ENCODE measurements at regions of chr4 and their contacts with region 1.

Region 1: GRCh38 chr4:3318561-3319021 is 25.8 kb downstream of the RGS12 start:
- DNase-seq: peak; percentile 93
- ATAC-seq: peak; percentile 99
- H3K4me3 Mint-ChIP-seq: peak overlapping the region; percentile 18; the same call in 1 of the 2 replicates
- H3K27ac Mint-ChIP-seq: peak overlapping the region; percentile 95
- H3K4me1 Mint-ChIP-seq: peaks cover 11% of the 10 kb centered on the region
- H3K27me3 Mint-ChIP-seq: no peaks in the 10 kb centered on the region
- CTCF ChIP-seq: peak; percentile 35

Region 2: GRCh38 chr4:3179126-3179706 is 139.4 kb before region 1 on chr4:
- CTCF ChIA-PET with region 1: no interaction called
- POLR2A ChIA-PET with region 1: no interaction called
- DNase-seq: no peak
- ATAC-seq: no peak
- H3K4me3 Mint-ChIP-seq: no peak overlapping the region
- H3K27ac Mint-ChIP-seq: peak overlapping the region; percentile 10; the same call in 1 of the 2 replicates
- H3K4me1 Mint-ChIP-seq: peaks cover 6% of the 10 kb centered on the region
- H3K27me3 Mint-ChIP-seq: no peaks in the 10 kb centered on the region
- CTCF ChIP-seq: no peak

Region 3: DNA sequence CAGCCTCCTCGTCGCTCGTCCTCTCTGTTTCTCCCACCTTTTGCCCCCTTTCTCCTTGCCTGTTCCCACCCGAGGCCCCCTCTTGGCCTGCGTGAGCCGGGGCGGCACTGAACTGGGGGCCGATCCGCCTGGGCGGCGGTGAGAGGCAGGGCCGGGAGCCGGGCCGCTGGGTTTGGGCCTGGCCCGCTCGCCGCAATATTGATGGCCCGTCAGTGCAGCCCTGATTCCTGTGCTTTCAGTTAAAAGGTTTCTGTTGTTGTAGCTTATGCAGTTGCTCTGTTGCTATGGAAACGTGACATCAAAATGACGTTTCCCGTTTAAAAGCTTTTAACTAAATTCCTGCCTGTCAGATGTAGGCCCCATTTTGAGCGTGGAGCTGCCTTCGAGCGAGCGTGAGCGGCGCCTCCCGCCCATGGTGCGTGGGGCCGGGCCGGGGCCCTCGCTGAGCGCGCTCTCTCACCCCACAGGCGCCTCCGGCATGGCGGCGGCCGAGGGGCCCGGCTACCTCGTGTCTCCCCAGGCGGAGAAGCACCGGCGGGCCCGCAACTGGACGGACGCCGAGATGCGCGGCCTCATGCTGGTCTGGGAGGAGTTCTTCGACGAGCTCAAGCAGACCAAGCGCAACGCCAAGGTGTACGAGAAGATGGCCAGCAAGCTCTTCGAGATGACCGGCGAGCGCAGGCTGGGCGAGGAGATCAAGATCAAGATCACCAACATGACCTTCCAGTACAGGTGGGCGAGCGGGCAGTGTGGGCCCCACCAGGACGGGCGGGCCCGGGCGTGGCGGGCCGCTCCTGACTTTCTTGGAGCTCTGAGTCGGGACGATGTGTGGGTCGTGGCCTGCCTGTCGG is 69.6 kb before region 1 on chr4 and contains the start of gene MSANTD1:
- CTCF ChIA-PET with region 1: interaction called, 25 read pairs
- POLR2A ChIA-PET with region 1: no interaction called
- DNase-seq: no peak
- ATAC-seq: no peak
- H3K4me3 Mint-ChIP-seq: no peak within 1 kb of the TSS
- H3K27ac Mint-ChIP-seq: no peak within 1 kb of the TSS
- H3K4me1 Mint-ChIP-seq: peaks cover 6% of the 10 kb centered on the region; the same call in 1 of the 2 replicates
- H3K27me3 Mint-ChIP-seq: no peaks in the 10 kb centered on the region
- CTCF ChIP-seq: no peak
- total RNA-seq, gene MSANTD1: 0.98 to 1.1 TPM (median 0.99 TPM) in 3 replicates

Region 4: DNA sequence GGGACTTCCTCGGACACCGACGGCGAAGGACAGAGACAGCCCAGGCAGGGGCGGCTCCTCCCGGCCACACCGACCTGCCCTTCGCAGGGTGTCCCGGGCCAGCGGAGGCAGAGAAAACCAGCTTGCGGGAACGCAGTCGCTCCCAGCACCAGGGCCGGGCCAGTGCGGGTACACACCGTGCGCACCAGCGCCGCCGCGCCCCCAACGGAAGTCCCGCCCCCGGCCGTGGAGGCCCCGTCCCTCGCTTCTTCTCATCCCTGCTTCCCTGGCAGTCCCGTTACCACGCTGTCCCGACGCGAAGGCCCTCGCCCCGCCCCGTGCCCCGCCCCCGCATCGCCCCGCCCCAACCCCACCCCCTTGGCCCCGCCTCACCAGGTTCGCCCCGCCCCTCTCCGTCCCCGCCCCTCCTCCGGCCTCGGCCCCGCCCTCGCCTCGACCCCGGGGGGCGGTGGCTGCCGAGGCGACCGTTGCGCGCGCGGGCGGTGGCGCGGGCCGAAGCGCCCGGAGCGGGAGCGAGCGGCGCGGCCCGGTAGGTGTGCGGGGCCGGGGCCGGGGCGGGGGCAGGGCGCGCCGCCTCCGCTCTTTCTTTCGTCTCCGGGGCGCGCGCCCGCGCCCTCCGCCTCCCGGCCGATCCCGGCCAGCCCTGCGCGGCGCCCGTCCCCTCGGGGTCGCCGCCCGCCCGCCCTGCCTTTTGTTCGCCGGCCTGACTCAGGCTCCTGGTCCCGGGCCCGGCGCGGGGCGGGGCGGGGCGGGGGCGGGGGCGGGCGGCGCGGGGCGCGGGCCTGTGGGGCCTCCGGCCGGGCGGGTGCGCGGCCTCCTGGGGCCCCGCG is 25.8 kb before region 1 on chr4 and contains the start of gene RGS12:
- CTCF ChIA-PET with region 1: interaction called, 45 read pairs
- POLR2A ChIA-PET with region 1: no interaction called
- DNase-seq: peak; percentile 96
- ATAC-seq: peak; percentile 89
- H3K4me3 Mint-ChIP-seq: peak within 1 kb of the TSS; percentile 79
- H3K27ac Mint-ChIP-seq: peak within 1 kb of the TSS; percentile 53; the same call in 1 of the 2 replicates
- H3K4me1 Mint-ChIP-seq: peaks cover 26% of the 10 kb centered on the region
- H3K27me3 Mint-ChIP-seq: peaks cover 23% of the 10 kb centered on the region
- CTCF ChIP-seq: no peak
- total RNA-seq, gene RGS12: 21.0 to 24.7 TPM (median 24.2 TPM) in 3 replicates

Region 5: DNA sequence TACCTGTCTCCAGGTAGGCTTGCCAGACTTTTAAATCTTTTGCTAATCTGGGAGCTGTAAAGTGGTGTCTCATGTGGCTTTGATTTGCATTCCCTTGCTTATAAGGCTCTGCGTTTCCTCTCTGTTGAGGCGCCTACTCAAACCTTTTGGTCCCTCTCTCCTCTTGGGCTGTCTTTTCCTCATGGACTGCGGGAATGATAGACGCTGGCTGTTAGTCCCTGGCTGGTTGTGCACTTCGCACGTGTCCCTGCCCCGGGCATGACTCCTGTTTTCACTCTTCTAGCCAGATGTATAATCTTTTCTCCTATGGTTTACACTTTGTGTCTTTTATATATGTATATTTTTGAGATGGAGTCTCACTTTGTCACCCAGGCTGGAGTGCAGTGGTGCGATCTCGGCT is 13.9 kb after region 1 on chr4:
- CTCF ChIA-PET with region 1: interaction called, 13 read pairs
- POLR2A ChIA-PET with region 1: no interaction called
- DNase-seq: no peak
- ATAC-seq: no peak
- H3K4me3 Mint-ChIP-seq: no peak overlapping the region
- H3K27ac Mint-ChIP-seq: peak overlapping the region; percentile 93; the same call in 1 of the 2 replicates
- H3K4me1 Mint-ChIP-seq: no peaks in the 10 kb centered on the region
- H3K27me3 Mint-ChIP-seq: no peaks in the 10 kb centered on the region
- CTCF ChIP-seq: no peak

Region 6: DNA sequence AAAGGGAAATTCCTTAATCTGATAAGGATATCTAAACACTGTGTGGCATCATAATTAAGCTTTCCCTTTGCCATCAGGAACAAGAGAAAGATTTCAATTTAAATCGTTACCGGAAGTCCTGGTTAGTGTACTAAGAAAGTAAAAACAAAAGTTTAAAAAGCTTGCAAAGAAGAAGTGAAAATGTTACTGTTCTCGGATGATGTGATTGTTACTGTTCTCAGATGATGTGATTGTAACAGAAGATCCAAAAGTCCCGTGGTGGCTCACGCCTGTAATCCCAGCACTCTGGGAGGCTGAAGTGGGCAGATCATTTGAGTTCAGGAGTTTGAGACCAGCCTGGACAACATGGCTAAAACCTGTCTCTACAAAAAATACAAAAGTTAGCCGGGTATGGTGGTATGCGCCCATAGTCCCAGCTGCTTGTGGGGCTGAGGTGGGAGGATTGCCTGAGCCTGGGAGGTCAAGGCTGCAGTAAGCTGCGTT is 36.7 kb after region 1 on chr4:
- CTCF ChIA-PET with region 1: interaction called, 10 read pairs
- POLR2A ChIA-PET with region 1: no interaction called
- DNase-seq: no peak
- ATAC-seq: no peak
- H3K4me3 Mint-ChIP-seq: no peak overlapping the region
- H3K27ac Mint-ChIP-seq: no peak overlapping the region
- H3K4me1 Mint-ChIP-seq: no peaks in the 10 kb centered on the region
- H3K27me3 Mint-ChIP-seq: no peaks in the 10 kb centered on the region; the same call in 1 of the 2 replicates
- CTCF ChIP-seq: no peak

Region 7: GRCh38 chr4:3426465-3427133 is 108.0 kb after region 1 on chr4:
- CTCF ChIA-PET with region 1: interaction called, 11 read pairs
- POLR2A ChIA-PET with region 1: no interaction called
- DNase-seq: no peak
- ATAC-seq: no peak
- H3K4me3 Mint-ChIP-seq: no peak overlapping the region
- H3K27ac Mint-ChIP-seq: no peak overlapping the region
- H3K4me1 Mint-ChIP-seq: no peaks in the 10 kb centered on the region
- H3K27me3 Mint-ChIP-seq: no peaks in the 10 kb centered on the region
- CTCF ChIP-seq: no peak

Region 8: DNA sequence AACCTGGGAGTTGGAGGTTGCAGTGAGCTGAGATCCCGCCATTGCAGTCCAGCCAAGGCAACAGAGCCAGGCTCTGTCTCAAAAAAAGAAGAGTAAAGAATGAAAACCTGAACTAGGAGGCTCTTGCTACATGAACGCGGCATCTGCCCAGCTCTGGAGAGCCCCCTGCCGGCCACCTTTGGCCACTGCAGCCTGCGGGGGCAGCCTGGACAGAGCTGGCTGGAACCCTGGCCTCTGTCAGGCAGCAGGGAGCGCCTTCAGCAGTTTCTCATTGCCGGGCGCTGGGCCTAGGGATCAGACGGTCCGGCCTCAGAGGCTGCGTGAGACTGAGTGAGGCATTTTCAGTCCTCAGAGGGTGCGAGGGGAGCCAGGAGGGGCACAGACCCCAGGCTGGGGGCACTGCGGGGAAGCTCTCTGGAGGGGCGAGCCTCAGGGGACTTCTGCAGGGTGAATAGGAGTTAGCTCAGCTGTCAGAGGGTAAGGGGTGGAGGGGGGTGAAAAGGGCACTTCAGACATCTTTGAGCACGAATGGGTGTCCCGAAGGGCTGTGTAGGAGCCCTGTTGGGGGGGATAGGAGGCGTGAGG is 162.0 kb after region 1 on chr4:
- CTCF ChIA-PET with region 1: interaction called, 46 read pairs
- POLR2A ChIA-PET with region 1: no interaction called
- DNase-seq: peak; percentile 95
- ATAC-seq: peak; percentile 85
- H3K4me3 Mint-ChIP-seq: peak overlapping the region; percentile 53
- H3K27ac Mint-ChIP-seq: no peak overlapping the region
- H3K4me1 Mint-ChIP-seq: peaks cover 18% of the 10 kb centered on the region
- H3K27me3 Mint-ChIP-seq: peaks cover 68% of the 10 kb centered on the region
- CTCF ChIP-seq: peak; percentile 99

Region 9: DNA sequence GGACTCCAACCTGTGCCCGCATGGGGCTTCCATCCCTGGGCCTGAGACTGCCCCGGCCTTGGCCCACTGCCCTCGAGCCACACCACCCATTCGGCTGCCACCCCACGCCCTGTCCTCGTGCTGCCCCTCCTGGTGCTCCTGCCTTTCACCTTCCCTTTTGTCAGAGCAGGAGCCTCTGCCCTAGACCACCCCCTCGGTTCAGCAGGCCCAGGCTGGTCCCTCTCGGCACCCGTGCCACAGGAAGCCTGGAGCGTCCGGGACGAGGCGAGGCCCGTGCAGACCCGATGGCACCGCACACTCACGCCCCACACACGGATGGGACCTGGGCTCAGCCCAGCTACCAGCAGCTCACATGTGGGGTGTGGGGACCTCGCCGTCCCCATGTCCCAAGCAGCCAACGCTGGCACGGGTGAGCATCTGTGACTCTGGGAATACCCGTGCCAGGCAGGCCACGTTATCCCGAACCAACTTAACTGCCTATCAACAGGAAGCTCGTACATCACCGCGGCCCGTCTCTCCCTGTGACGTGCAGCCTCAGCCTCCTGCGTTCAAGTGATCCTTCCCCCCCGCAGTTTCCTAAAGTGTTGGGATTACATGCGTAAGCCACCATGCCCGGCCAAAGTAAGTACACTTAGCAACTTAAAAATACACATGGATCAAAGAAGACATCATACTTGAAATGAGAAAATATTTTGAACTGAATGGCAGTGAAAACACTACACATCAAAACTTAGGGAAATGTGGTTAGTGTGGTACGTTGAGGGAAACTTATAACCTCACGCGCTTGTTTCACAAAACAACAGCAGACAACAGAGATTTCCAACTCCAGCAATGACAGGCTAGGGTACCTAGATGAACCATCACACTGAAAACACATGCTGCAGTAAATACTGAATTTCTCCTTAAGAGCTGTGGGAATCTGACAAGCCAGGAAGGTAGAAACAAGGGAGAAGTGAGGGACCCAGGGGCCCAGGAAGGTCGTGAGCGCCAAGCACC is 184.6 kb after region 1 on chr4:
- CTCF ChIA-PET with region 1: no interaction called
- POLR2A ChIA-PET with region 1: no interaction called
- DNase-seq: no peak
- ATAC-seq: no peak
- H3K4me3 Mint-ChIP-seq: no peak overlapping the region
- H3K27ac Mint-ChIP-seq: no peak overlapping the region
- H3K4me1 Mint-ChIP-seq: no peaks in the 10 kb centered on the region
- H3K27me3 Mint-ChIP-seq: peaks cover 5% of the 10 kb centered on the region
- CTCF ChIP-seq: no peak